Sciatic nerve (tissue), 2 donors: ENCODE measurements at regions of chr6 and their contacts with region 1.

Region 1: DNA sequence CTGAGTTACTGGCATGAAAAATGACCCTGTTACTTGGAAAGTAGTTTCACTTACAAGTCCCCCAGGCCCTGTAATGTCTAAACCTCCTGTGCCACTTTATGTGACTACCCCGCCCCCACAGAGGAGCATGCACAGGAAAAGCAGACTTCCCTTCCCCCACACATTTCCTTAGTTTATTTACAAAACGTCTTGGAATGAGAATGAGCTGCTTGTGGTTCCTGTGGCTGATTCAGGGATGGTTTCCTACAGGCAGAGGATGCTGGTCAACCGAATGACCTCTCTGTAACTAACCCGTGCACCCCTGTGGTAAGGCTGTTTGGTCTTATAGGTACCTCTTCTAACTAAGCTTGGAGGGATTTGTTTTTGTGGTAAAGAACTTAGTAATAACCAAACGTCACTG is 28.5 kb downstream of the RSPO3 start:
- DNase-seq: no peak
- ATAC-seq: peak; percentile 49

Region 2: DNA sequence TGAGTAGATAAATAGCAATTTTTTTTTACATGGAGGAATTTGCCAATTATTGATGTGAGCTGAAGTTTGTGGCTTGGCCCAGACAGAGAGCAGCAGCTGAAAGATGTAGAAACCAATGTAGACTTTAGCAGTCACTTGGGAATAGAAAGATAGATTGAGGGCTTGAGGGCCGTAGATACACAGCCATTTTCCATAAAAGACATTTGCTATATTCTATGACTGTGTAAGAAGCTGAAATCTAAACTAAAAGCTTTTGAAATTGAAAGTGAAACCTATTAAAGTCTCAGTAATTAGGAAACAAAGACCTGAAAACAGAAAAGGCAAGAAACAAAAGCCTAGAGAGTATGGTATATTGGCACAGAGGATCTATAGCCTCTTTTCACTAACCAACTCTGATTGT is 474.3 kb before region 1 on chr6:
- intact Hi-C with region 1: no loop called
- DNase-seq: no peak
- ATAC-seq: no peak

Region 3: GRCh38 chr6:127111526-127111925 is 35.4 kb before region 1 on chr6:
- intact Hi-C with region 1: loop called (anchors 1 kb)
- DNase-seq: no peak
- ATAC-seq: no peak

Region 4: DNA sequence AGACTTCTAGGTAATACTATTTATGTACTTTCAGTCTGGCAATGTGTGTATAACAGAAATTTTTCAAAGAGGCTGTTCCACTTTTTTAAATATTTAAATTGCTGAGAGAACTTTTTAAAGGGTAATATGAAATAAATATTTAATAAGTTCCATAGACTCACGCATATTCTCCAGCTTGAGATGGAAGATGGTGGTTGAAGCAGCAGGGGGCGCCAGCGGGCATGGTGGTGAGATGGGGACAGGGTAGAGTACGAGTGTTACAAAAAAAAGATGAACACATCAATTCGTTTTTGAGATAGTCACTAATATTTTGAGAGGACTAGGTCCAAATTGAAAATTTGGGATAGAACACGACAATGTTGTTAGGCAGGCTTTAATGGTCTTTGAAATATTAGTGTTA is 40.0 kb after region 1 on chr6:
- intact Hi-C with region 1: no loop called
- DNase-seq: peak; percentile 74
- ATAC-seq: peak; percentile 51